ENCODE measurements at regions of chr17 and their contacts with region 1.

Region 1: DNA sequence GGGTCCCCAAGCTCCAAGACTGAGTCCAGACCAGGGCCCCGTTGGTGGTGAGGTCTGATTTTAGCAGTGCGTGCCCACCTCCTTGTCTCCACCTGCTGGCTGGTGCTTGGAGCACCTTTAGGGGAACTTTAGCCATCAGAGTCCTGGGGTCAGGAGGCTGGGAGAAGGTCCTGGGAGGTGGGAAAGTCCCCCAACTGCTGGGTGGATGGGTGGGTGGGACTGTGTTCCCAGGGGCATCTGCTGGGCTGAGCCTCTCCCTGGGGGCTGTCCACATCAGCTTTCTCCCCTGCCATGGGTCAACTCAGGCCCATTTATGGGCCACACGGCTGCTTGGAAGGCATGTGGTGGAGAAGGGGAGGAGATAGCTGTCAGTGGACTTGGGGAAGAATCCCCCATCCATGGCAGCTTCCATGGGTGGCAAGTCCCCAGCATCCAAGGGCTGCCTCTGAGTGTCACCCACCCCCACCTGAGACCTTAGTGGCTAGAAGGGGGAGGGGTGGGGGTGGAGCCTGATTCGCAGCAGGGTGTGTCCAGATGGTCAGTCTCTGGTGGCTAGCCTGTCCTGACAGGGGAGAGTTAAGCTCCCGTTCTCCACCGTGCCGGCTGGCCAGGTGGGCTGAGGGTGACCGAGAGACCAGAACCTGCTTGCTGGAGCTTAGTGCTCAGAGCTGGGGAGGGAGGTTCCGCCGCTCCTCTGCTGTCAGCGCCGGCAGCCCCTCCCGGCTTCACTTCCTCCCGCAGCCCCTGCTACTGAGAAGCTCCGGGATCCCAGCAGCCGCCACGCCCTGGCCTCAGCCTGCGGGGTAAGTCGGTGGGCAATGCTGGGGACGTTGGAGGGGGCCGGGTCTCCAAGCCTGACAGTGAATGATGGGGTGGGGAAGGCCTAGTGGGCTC is at the start of gene TRPV2:
- DNase-seq: peak; percentile 59 to 71 (median 68)
- H3K4me3 ChIP-seq: peak within 1 kb of the TSS; percentile 58 to 92 (median 81)
- H3K27ac ChIP-seq: peak within 1 kb of the TSS; percentile 74 to 91
- H3K4me1 ChIP-seq: peaks cover 9 to 57% (median 56%) of the 10 kb centered on the region in 4 experiments
- H3K27me3 ChIP-seq: no peaks in the 10 kb centered on the region

Region 2: DNA sequence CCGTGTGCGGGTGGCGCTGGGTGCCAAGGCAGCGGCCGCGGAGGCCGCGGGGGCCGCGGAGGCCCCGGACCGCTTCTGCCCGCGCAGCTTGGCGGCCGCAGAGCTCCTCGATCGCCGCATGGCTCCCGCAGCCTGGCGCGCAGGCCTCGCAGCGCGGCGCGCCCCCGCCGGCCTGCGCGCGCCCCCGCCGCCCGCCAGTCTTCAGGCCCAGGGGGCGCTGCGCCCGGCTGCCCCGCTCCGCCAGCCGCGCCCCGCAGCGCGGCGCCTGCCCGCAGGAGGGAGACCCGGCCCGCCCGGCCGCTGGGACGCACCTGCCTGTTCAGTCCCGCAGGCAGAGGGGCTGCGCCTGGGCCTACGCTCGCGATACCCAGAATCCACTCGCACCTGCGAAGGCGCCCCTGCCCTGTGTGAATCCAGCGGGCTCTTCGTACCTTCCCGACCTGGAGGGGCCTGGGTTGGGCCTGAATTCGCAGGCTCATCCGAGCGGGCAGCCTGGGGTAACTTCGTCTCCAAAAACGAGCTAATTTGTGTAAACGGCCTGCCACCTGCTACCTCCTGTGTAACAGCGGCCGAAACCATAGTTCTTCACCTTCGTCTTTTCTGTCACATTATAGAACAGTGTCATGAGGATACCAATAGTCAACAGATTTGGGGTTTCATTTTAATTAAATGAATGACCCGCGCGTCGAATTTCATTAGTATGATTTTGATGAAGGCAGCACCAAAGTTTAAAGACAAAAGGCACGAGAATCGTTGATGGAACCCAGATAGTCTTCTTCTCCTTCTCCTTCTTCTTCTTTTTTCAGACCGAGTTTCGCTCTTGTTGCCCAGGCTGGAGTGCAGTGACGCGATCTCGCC is 61.7 kb before region 1 on chr17 and contains the start of gene CENPV:
- CTCF ChIA-PET with region 1: interaction called, 11 read pairs
- POLR2A ChIA-PET with region 1: interaction called, 3 read pairs
- DNase-seq: peak; percentile 69 to 81 (median 75)
- H3K4me3 ChIP-seq: peak within 1 kb of the TSS; percentile 58 to 83 (median 71)
- H3K27ac ChIP-seq: no peak within 1 kb of the TSS
- H3K4me1 ChIP-seq: peaks cover 0 to 20% (median 17%) of the 10 kb centered on the region in 4 experiments
- H3K27me3 ChIP-seq: peaks cover 0 to 7% (median 0%) of the 10 kb centered on the region in 5 experiments

Region 3: GRCh38 chr17:16380640-16381495 is 34.4 kb before region 1 on chr17 and contains the start of gene UBB:
- CTCF ChIA-PET with region 1: interaction called, 42 read pairs
- POLR2A ChIA-PET with region 1: interaction called, 39 read pairs
- DNase-seq: peak; percentile 98 to 99 (median 99)
- H3K4me3 ChIP-seq: peak within 1 kb of the TSS; percentile 40 to 96 (median 86)
- H3K27ac ChIP-seq: peak within 1 kb of the TSS; percentile 99 to 100
- H3K4me1 ChIP-seq: peaks cover 6 to 38% (median 23%) of the 10 kb centered on the region in 4 experiments
- H3K27me3 ChIP-seq: no peaks in the 10 kb centered on the region

Region 4: GRCh38 chr17:16391451-16391850 is 23.8 kb before region 1 on chr17:
- CTCF ChIA-PET with region 1: interaction called, 42 read pairs
- POLR2A ChIA-PET with region 1: interaction called, 6 read pairs
- DNase-seq: no peak
- H3K4me3 ChIP-seq: no peak overlapping the region
- H3K27ac ChIP-seq: no peak overlapping the region
- H3K4me1 ChIP-seq: peaks cover 0 to 19% (median 10%) of the 10 kb centered on the region in 4 experiments
- H3K27me3 ChIP-seq: no peaks in the 10 kb centered on the region

Region 5: GRCh38 chr17:16398270-16399267 is 16.7 kb before region 1 on chr17:
- CTCF ChIA-PET with region 1: interaction called, 26 read pairs
- POLR2A ChIA-PET with region 1: interaction called, 4 read pairs
- DNase-seq: peak; percentile 91 to 99 (median 96)
- H3K4me3 ChIP-seq: no peak overlapping the region
- H3K27ac ChIP-seq: peak overlapping the region; percentile 68 to 76
- H3K4me1 ChIP-seq: peaks cover 6 to 45% (median 29%) of the 10 kb centered on the region in 4 experiments
- H3K27me3 ChIP-seq: no peaks in the 10 kb centered on the region

Region 6: DNA sequence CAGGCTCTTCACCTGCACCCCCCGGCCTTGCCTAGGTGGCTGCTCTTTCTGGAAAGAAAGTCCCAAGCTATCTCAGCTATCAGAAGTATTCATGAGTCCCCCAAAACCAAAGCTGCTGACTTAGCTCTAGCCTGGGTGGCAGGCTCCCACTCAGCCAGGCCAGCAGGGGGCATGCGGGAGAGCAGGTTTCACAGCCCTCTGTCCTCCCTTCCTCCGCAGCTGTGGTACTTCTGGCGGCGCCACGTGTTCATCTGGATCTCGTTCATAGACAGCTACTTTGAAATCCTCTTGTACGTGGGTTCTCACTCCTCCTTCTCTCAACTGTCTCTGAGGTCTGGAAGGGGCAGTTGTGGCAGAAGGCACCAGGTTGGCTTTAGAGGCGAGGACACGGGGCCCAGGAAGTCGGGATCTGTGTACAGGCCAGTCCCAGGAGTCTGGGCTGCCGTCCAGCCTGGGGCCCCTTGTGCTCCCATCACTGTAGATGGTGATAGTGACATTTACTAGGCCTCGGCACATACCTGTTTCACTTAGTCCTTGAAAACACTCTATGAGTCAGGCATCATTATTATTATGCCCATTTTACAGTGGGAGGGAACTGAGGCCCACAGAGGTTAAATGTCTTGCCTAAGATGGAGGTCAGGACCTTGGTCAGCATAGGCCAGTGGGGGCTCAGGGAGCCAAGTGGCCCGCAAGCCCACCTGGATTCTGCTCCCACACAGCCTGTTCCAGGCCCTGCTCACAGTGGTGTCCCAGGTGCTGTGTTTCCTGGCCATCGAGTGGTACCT is 13.0 kb after region 1 on chr17:
- CTCF ChIA-PET with region 1: interaction called, 67 read pairs
- POLR2A ChIA-PET with region 1: interaction called, 4 read pairs
- DNase-seq: peak; percentile 41 to 67 (median 64)
- H3K4me3 ChIP-seq: no peak overlapping the region
- H3K27ac ChIP-seq: no peak overlapping the region
- H3K4me1 ChIP-seq: no peaks in the 10 kb centered on the region
- H3K27me3 ChIP-seq: no peaks in the 10 kb centered on the region

Region 7: DNA sequence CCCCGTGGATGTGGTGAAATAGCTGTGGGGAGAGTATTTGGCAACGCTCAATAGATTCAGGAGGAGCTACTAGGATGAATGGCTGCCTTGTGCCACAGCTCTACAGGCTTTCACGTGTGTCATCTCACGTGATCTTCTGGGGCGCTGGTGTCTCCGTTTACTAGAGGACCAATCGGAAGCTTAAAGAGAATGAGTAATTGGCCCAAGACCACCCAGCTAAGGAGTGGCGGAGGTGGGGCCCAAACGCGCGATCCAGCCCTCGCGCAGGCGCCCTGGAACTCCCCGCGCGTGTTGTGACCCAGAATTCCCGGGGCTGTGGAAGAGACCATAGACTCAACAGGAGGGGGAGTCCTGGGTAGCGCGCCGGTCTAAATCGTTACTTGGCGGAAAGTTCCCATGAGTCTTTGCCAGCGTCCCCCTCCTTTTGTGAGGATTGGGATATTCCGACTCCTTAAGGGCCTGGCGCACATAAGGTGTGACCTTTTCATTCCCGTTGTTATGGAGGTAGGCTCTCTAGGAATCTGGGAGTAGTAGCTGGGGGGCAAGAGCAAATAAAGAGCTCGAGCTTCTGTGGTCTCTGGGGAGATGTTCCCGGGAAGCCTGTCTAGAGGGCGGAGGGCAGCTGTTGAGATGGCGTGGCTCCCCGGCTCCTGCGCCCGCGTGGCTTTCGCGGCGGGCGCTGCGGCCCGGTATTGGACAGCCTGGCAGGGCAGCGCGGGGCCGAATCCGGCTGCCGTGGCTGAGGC is 23.5 kb after region 1 on chr17:
- CTCF ChIA-PET with region 1: interaction called, 67 read pairs
- POLR2A ChIA-PET with region 1: interaction called, 13 read pairs
- DNase-seq: peak; percentile 99 to 100 (median 100)
- H3K4me3 ChIP-seq: peak overlapping the region; percentile 60 to 98 (median 90)
- H3K27ac ChIP-seq: peak overlapping the region; percentile 74 to 90
- H3K4me1 ChIP-seq: peaks cover 9 to 59% (median 46%) of the 10 kb centered on the region in 4 experiments
- H3K27me3 ChIP-seq: no peaks in the 10 kb centered on the region

Measured in common myeloid progenitor, CD34-positive (primary cell).